ENCODE measurements at regions of chr3 and their contacts with region 1.

Region 1: DNA sequence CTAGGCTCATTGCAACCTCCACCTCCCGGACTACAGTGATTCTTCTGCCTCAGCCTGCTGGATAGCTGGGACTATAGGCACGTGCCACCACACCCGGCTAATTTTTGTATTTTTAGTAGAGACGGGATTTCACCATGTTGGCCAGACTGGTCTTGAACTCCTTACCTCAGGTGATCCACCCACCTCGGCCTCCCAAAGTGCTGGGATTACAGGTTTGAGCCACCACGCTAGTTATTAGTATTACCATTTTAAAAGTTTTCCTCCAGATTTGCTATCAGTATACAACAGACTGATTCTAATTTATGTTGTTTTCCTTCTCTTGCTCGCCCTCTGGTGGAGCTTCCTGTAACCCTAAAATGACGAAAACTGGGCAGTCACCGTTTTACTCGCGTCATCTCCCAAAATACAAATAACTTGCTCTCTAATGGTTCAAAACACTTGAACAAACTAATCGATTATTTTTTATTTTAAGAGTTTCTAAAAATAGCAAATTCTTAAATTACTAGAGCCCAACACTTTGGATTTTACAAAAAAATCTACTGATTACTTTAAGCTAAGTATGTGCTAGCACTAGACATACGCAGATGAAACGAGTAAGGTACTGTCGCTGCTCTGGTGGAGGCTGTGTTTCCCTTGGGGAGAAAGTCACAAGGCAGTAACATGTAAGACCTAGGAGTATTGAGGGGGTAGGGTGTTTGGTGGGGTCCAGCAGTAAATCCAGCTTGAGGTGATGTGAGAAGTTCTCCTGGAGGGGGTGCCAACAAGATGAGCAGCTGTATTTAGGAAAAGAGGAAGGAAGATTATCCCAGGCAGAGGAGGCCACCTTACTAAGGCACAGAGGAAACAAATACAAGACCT is 203.3 kb downstream of the MBNL1 start:
- DNase-seq: peak; percentile 46
- CTCF ChIP-seq: peak; percentile 71

Region 2: DNA sequence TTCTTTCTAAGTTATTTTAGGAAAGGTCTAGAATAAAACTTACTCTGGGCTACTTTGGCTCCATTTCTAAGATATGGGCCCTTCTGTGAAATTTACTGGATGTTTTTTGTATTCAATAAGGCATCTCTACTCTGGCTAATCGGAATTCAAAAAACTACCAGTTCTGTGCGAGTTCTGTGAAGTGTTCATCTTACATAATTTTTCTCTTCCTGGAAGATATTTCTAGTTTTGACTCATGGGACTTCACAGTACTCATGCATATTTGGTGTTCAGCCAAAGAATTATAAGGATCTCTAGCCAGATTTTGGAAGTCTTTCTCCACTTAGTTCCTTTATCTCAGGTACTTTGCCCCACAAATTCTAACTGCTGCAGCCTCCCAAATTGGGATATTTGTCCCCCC is 249.7 kb before region 1 on chr3:
- CTCF ChIA-PET with region 1: no interaction called
- POLR2A ChIA-PET with region 1: no interaction called
- DNase-seq: peak; percentile 23
- CTCF ChIP-seq: no peak

Region 3: GRCh38 chr3:152444029-152444641 is 27.9 kb before region 1 on chr3:
- CTCF ChIA-PET with region 1: interaction called, 14 read pairs
- POLR2A ChIA-PET with region 1: interaction called, 5 read pairs
- DNase-seq: peak; percentile 17
- CTCF ChIP-seq: peak; percentile 60

Region 4: DNA sequence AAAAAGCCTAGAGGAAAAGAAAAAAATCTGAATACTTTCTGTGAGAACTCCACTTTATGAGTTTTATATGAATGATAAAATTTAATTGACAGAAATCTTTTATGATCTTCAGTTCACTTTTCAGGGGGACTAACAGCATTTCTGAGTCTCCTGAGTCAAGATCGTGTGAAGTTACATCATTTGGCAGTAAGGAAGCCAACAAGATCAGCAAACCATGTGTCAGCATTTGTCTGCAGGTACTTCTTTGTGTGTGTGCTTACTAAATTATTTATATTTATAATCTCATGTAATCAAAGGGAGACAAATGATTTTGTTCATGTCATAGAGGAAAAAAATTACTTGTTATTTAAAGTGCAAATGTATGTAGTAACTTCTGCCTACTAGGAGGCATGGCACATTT is 14.3 kb after region 1 on chr3:
- CTCF ChIA-PET with region 1: interaction called, 17 read pairs
- POLR2A ChIA-PET with region 1: no interaction called
- DNase-seq: no peak
- CTCF ChIP-seq: no peak

Region 5: GRCh38 chr3:152519376-152519775 is 47.3 kb after region 1 on chr3:
- CTCF ChIA-PET with region 1: interaction called, 36 read pairs
- POLR2A ChIA-PET with region 1: no interaction called
- DNase-seq: no peak
- CTCF ChIP-seq: no peak

Region 6: GRCh38 chr3:152574461-152575079 is 102.5 kb after region 1 on chr3:
- CTCF ChIA-PET with region 1: interaction called, 27 read pairs
- POLR2A ChIA-PET with region 1: no interaction called
- DNase-seq: peak; percentile 26
- CTCF ChIP-seq: peak; percentile 54